ENCODE measurements at regions of chr1 and their contacts with region 1.

Region 1: DNA sequence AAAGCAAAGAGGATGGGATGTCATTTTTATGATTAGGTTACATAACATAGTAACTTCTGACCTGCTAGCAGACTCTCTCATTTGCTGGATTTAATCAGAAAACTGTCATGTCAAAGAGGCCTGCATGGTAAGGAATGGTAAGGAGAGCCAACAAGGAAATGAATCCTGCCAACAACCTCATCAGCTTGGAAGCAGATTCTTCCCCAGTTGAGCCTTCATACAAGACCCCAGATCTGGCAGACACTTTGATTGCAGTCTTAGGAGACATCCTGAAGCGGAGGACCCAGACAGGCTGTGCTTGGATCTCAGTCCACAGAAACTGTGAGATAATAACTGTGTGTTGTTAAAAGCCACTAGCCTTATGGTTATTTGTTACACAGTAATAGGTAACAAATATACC is 27.6 kb upstream of the MARK1 start:
- DNase-seq: no peak

Region 2: DNA sequence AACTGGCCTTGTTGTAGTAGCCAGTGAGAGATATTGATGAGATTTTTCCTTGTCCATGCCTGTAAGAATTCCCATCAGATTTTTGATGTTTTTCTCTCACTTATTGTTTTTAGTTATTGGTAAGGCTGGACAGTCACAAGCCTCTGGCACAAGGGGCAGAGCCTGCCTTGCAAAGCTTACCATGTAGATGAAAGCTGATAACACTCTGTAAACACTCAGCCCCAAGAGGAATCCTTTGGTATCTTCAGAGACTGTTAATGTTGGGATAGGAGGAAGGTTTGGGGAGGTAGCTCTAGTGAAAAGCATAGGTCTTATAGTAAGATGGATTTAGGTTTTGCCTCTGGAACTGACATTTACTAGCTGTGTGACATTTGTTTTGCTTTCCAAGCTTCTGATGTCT is 65.3 kb after region 1 on chr1:
- intact Hi-C with region 1: loop called in 1 of 2 experiments (anchors 2 kb)
- DNase-seq: no peak

Measured in posterior vena cava (tissue), 2 donors.